Mucosa of descending colon (tissue), 3 donors: ENCODE measurements at regions of chr20 and their contacts with region 1.

Region 1: GRCh38 chr20:35146920-35147574 is at the start of gene EDEM2:
- DNase-seq: peak; percentile 92 to 97 (median 95)
- ATAC-seq: peak; percentile 96
- H3K4me3 ChIP-seq: peak within 1 kb of the TSS; percentile 56
- H3K4me1 ChIP-seq: peaks cover 4% of the 10 kb centered on the region
- CTCF ChIP-seq: no peak
- total RNA-seq, gene EDEM2: 17.9 to 32.1 (median 22.5) TPM

Region 2: DNA sequence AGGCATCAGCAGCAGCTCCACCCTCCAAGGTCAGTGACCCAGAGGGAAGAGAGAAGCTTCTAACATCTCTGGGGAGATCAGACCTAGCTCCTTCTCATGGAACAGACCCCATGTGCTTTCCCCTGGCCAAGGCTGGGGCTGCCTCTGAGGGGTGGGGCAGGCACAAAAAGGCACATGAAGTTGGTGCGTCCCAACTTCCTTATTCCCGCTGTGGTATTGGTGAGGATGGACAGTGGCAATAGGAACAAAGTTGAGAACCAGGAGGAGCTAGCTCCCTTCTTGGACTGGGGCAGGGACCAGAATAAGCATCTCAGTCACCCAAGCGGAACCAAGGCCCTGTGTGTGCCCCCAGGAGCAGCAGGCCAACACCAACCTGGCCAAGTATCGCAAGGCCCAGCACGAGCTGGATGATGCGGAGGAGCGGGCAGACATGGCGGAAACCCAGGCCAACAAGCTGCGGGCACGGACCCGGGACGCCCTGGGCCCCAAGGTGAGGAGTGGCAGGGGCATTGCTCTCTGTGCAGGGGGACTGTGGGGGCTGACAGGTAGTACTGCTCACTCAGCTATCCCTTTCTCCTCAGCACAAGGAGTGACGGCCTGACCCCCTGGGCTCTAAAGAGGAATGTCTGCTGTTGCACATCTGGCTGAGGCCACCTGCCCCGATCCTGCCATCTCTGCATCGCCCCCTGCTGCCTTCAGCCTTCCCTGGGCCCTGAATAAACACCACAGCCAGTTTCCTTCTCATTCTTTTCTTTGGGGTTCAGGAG is 145.3 kb before region 1 on chr20:
- intact Hi-C with region 1: no loop called
- DNase-seq: peak; percentile 44 to 59 (median 48)
- ATAC-seq: no peak
- H3K4me3 ChIP-seq: no peak overlapping the region
- H3K4me1 ChIP-seq: peaks cover 4% of the 10 kb centered on the region
- CTCF ChIP-seq: no peak

Region 3: DNA sequence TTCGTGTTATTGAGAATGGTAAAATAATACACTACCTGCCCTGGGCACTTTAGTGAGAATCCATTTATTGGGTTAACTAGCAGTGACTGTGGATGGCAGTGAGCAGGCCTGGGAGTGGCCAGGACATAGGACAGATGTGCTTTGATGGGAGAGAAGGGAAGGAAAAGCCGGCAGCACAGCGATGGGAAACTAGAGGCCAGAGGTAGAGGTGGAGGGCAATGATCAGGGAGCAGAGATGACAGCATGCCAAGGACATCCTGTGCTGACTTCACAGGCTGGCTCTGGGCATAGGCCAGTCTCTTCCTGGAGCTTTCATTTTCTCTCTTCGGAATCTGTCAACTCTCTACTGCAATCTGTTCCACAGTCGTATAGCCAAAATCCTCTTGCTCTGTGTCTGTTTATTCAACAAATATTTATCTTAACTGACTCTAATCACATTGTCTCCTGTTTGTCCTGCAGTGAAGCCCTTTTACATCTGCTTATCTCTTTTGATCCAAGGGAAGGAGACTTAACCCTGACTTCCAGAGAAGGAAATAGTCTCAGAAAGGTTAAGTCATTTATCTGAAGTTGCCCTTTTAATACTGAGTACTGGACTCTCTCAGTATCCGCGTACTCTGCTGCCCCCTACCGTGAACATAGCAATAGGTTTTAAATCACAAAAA is 61.0 kb after region 1 on chr20:
- intact Hi-C with region 1: loop called (anchors 1 to 10 kb)
- DNase-seq: peak in 2 of 3 donors; percentile 73 to 94
- ATAC-seq: peak; percentile 98
- H3K4me3 ChIP-seq: no peak overlapping the region
- H3K4me1 ChIP-seq: peaks cover 9% of the 10 kb centered on the region
- CTCF ChIP-seq: peak; percentile 42

Region 4: GRCh38 chr20:35215066-35215956 is 68.3 kb after region 1 on chr20:
- intact Hi-C with region 1: loop called in 1 of 2 experiments (anchors 10 kb)
- DNase-seq: no peak
- ATAC-seq: no peak
- H3K4me3 ChIP-seq: no peak overlapping the region
- H3K4me1 ChIP-seq: no peaks in the 10 kb centered on the region
- CTCF ChIP-seq: no peak

Region 5: DNA sequence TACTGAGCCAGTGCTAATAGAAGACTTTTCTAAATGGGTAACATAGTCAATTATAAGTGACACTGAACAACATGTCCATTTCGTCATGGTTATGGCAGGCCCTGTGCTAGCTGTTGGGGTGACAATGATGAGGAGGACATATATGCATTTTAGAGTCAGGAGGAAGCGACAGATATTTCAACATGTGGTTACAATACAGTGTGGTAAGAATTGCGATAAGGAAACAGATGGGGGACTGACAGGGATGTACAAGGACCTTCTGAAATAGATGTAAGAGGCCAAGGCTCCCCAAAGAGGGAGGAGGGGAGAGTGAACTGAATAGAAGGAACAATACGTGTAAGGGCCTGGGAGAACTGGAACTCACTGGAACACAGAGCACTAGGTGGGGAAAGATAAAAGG is 91.1 kb after region 1 on chr20:
- intact Hi-C with region 1: no loop called
- DNase-seq: no peak
- ATAC-seq: no peak
- H3K4me3 ChIP-seq: no peak overlapping the region
- H3K4me1 ChIP-seq: no peaks in the 10 kb centered on the region
- CTCF ChIP-seq: no peak